Spleen (tissue), 13 donors: ENCODE measurements at regions of chr3 and their contacts with region 1.

Region 1: GRCh38 chr3:194404365-194405140 is 5.5 kb upstream of the GP5 start:
- DNase-seq: no peak
- H3K4me3 ChIP-seq: no peak overlapping the region
- H3K27ac ChIP-seq: no peak overlapping the region
- H3K4me1 ChIP-seq: peaks cover 0 to 6% (median 0%) of the 10 kb centered on the region in 6 donors
- H3K27me3 ChIP-seq: peaks cover 0 to 7% (median 0%) of the 10 kb centered on the region in 7 donors
- CTCF ChIP-seq: peak; percentile 19 to 71 (median 48)
- POLR2A ChIP-seq: no peak

Region 2: DNA sequence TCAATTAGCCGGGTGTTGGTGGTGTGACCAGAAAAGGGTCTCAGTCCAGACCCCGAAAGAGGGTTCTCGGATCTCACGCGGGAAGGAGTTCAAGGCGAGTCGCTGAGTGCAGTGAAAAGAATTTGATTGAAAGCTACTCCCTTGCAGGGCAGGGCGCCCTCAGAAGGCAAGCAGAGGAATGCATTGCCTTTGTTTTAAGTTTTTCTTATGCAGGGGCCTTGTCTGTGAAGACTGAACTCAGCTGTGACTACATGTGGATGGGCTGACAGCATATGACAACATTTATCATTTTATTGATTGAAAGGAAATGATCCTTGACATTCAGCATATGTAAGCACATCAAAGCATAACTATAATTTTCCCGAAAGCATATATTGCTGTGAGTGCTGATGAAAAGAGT is 65.2 kb before region 1 on chr3:
- intact Hi-C with region 1: loop called (anchors 5 kb)
- DNase-seq: no peak
- H3K4me3 ChIP-seq: no peak overlapping the region
- H3K27ac ChIP-seq: no peak overlapping the region
- H3K4me1 ChIP-seq: peaks cover 0 to 7% (median 2%) of the 10 kb centered on the region in 6 donors
- H3K27me3 ChIP-seq: peaks cover 0 to 45% (median 0%) of the 10 kb centered on the region in 7 donors
- CTCF ChIP-seq: no peak
- POLR2A ChIP-seq: no peak